CD4-positive, alpha-beta T cell (primary cell): ENCODE measurements at regions of chr19 and their contacts with region 1.

Region 1: GRCh38 chr19:38374429-38375176 is at the start of gene PSMD8:
- DNase-seq: peak; percentile 95 to 100 (median 98)
- ATAC-seq: peak; percentile 96
- H3K4me3 ChIP-seq: peak within 1 kb of the TSS; percentile 93
- H3K4me3 Mint-ChIP-seq: peak within 1 kb of the TSS; percentile 99
- H3K27ac ChIP-seq: peak within 1 kb of the TSS; percentile 77 to 89
- H3K27ac Mint-ChIP-seq: peak within 1 kb of the TSS; percentile 89
- H3K4me1 ChIP-seq: peaks cover 34% of the 10 kb centered on the region
- H3K4me1 Mint-ChIP-seq: peaks cover 30% of the 10 kb centered on the region
- H3K27me3 ChIP-seq: no peaks in the 10 kb centered on the region
- H3K27me3 Mint-ChIP-seq: peaks cover 6% of the 10 kb centered on the region
- CTCF ChIP-seq: peak; percentile 19
- total RNA-seq, gene PSMD8: 61.2 to 64.4 TPM

Region 2: GRCh38 chr19:38245826-38246498 is 128.6 kb before region 1 on chr19:
- CTCF ChIA-PET with region 1: interaction called, 4 read pairs
- POLR2A ChIA-PET with region 1: interaction called, 5 read pairs
- intact Hi-C with region 1: loop called in 1 of 2 experiments (anchors 2 kb)
- DNase-seq: no peak
- ATAC-seq: no peak
- H3K4me3 ChIP-seq: no peak overlapping the region
- H3K4me3 Mint-ChIP-seq: no peak overlapping the region
- H3K27ac ChIP-seq: no peak overlapping the region
- H3K27ac Mint-ChIP-seq: no peak overlapping the region
- H3K4me1 ChIP-seq: peaks cover 7% of the 10 kb centered on the region
- H3K4me1 Mint-ChIP-seq: peaks cover 4% of the 10 kb centered on the region
- H3K27me3 ChIP-seq: peaks cover 0 to 2% of the 10 kb centered on the region in 2 experiments
- H3K27me3 Mint-ChIP-seq: no peaks in the 10 kb centered on the region
- CTCF ChIP-seq: no peak

Region 3: DNA sequence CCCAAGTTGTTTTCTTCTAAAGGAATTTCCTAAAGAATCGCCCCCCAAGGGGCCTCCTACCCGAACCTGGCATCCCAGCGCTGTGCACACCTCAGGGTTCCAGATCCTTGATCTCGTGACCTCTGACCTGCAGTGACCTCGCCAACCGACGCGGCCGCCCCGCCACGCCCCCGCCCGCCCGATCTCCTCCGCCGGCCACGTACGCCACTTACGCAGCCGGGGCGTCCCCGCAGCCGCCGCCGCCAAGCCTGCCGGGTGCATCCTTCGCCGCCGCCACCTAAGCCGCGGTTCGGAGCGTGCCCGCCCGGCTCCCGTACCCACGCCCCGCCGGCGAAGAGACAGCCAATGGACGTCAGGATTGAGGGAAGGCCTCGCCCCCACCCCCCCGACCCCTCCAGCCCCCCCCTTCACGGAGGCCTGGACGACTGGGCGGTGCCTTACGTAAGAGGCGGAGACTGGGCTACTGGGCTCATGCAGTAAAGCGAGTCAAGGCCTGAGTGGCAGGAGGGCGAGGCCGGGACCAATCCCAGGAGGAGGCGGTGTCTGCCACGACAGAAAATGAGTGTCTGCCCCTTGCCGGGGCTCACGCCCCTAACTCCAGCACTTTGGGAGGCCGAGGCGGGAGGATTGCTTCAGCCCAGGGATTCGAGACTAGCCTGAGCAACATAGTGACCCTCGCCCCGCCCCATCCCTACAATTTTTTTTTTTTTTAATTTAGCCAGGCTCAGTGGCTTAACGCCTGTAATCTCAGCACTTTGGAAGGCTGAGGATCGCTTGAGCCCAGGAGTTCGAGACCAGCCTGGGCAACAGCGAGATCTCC is 58.7 kb before region 1 on chr19 and contains the start of gene YIF1B:
- CTCF ChIA-PET with region 1: no interaction called
- POLR2A ChIA-PET with region 1: interaction called, 5 read pairs
- intact Hi-C with region 1: loop called (anchors 1 kb)
- DNase-seq: peak; percentile 90 to 98 (median 94)
- ATAC-seq: peak; percentile 90
- H3K4me3 ChIP-seq: peak within 1 kb of the TSS; percentile 76
- H3K4me3 Mint-ChIP-seq: peak within 1 kb of the TSS; percentile 90
- H3K27ac ChIP-seq: peak within 1 kb of the TSS; percentile 79 to 88
- H3K27ac Mint-ChIP-seq: peak within 1 kb of the TSS; percentile 88
- H3K4me1 ChIP-seq: peaks cover 51% of the 10 kb centered on the region
- H3K4me1 Mint-ChIP-seq: peaks cover 45% of the 10 kb centered on the region
- H3K27me3 ChIP-seq: no peaks in the 10 kb centered on the region
- H3K27me3 Mint-ChIP-seq: no peaks in the 10 kb centered on the region
- CTCF ChIP-seq: no peak
- total RNA-seq, gene YIF1B: 15.9 to 17.1 TPM

Region 4: DNA sequence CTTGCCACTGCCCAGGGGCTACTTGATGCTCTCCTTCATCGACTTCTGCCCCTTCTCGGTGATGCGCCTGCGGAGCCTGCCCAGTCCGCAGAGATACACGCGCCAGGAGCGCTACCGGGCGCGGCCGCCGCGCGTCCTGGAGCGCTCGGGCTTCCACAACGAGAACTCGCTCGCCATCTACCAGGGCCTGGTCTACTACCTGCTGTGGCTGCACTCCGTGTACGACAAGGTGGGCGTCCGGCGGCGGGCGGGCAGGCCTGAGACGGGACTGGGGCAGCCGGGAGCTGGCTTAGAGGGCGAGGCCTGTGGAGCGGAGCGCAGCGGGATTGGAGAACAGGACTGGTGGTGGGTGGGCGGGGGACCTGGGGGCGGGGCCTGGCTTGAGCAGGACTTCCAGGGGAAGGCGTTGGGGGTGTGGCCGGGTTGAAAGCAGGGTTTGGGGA is 12.9 kb before region 1 on chr19:
- CTCF ChIA-PET with region 1: interaction called, 7 read pairs
- POLR2A ChIA-PET with region 1: interaction called, 11 read pairs
- intact Hi-C with region 1: no loop called
- DNase-seq: peak; percentile 25 to 81 (median 44)
- ATAC-seq: peak; percentile 73
- H3K4me3 ChIP-seq: peak overlapping the region; percentile 74
- H3K4me3 Mint-ChIP-seq: peak overlapping the region; percentile 82
- H3K27ac ChIP-seq: no peak overlapping the region
- H3K27ac Mint-ChIP-seq: no peak overlapping the region
- H3K4me1 ChIP-seq: peaks cover 19% of the 10 kb centered on the region
- H3K4me1 Mint-ChIP-seq: peaks cover 14% of the 10 kb centered on the region
- H3K27me3 ChIP-seq: peaks cover 0 to 6% of the 10 kb centered on the region in 2 experiments
- H3K27me3 Mint-ChIP-seq: peaks cover 20% of the 10 kb centered on the region
- CTCF ChIP-seq: no peak

Region 5: DNA sequence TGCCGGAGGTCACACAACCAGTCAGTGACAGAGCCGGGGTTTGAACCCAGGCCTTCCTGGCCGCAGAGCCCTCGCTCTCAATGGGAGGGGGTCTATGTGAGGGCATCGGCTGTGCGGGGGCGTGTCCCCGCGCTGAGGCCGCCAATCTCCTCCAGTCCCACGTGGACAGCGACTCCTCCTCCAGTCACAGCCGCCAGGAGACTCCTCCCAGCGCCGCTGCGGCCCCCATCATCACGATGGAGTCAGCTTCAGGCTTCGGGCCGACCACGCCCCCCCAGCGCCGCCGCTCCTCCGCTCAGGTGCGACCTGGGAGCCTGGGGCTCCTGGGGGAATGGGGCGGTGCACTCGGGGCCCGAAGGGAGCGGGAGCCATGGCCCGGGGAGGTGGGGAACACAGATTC is 19.9 kb after region 1 on chr19:
- CTCF ChIA-PET with region 1: no interaction called
- POLR2A ChIA-PET with region 1: interaction called, 45 read pairs
- intact Hi-C with region 1: loop called in 1 of 2 experiments (anchors 2 kb)
- DNase-seq: peak; percentile 33 to 86 (median 60)
- ATAC-seq: peak; percentile 64
- H3K4me3 ChIP-seq: peak overlapping the region; percentile 44
- H3K4me3 Mint-ChIP-seq: peak overlapping the region; percentile 71
- H3K27ac ChIP-seq: no peak overlapping the region
- H3K27ac Mint-ChIP-seq: peak overlapping the region; percentile 72
- H3K4me1 ChIP-seq: peaks cover 19% of the 10 kb centered on the region
- H3K4me1 Mint-ChIP-seq: peaks cover 26% of the 10 kb centered on the region
- H3K27me3 ChIP-seq: no peaks in the 10 kb centered on the region
- H3K27me3 Mint-ChIP-seq: peaks cover 4% of the 10 kb centered on the region
- CTCF ChIP-seq: no peak

Region 6: DNA sequence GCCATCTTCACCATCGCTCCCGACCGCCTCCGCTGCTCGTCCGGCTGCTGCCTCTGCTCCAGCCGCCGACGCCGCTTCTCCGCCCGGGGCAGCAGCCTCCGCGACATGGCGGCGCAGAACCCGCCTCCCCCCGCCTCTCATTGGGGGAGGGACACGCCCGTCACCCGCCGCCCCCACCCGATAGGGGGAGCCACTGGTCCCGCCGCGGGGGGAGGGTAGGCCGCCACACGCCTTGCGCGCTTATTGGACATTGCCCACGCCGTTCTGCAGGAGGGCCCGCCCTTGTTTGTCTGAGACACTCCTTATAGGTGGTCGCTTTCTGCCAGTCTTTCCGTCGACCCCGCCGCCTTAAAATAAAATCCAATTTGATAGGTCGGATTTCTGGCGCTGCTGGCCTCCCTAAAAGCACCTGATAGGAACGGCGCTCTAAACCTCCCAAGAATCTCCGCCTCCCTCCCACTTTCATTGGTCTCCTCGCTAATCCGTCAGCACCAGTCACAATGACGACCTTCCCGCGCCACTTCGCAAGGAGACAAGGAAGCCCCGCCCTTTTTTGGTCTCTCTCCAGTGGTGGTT is 475.3 kb after region 1 on chr19 and contains the start of gene HNRNPL:
- CTCF ChIA-PET with region 1: no interaction called
- POLR2A ChIA-PET with region 1: interaction called, 19 read pairs
- intact Hi-C with region 1: no loop called
- DNase-seq: peak; percentile 98 to 100 (median 99)
- ATAC-seq: peak; percentile 69
- H3K4me3 ChIP-seq: peak within 1 kb of the TSS; percentile 76
- H3K4me3 Mint-ChIP-seq: peak within 1 kb of the TSS; percentile 98
- H3K27ac ChIP-seq: peak within 1 kb of the TSS; percentile 95 to 97
- H3K27ac Mint-ChIP-seq: peak within 1 kb of the TSS; percentile 97
- H3K4me1 ChIP-seq: peaks cover 66% of the 10 kb centered on the region
- H3K4me1 Mint-ChIP-seq: peaks cover 63% of the 10 kb centered on the region
- H3K27me3 ChIP-seq: no peaks in the 10 kb centered on the region
- H3K27me3 Mint-ChIP-seq: no peaks in the 10 kb centered on the region
- CTCF ChIP-seq: peak; percentile 16
- total RNA-seq, gene HNRNPL: 535 to 565 TPM

Region 7: DNA sequence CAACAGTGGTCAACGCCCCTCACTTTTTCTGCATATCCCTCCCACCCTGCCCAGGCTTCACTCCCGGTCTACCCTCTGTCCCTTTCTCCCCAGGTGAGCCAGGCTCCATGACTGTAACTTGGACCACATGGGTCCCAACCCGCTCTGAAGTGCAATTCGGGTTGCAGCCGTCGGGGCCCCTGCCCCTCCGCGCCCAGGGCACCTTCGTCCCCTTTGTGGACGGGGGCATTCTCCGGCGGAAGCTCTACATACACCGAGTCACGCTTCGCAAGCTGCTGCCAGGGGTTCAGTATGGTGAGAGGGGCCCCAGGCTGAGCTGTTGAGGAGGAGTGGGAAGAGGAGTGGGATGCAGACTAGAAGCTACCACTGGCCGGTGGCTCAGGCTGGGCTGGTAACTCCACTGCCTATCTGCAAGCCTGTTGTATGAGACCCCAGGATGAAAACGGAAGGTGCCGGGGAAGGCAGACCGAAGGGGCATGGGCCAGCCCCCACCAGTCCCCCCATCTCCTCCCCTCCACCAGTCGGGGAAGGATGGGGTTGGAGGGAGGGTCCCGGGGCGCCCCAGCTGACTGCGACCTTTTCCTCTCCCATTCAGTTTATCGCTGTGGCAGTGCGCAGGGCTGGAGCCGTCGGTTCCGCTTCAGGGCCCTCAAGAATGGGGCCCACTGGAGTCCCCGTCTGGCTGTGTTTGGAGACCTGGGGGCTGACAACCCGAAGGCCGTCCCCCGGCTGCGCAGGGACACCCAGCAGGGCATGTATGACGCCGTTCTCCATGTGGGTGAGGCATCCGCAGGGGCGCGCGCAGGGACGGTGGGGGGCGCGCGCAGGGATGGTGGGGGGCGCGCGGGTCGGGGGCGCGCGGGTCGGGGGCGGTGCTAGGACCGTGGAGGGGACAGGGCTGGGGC is 724.0 kb after region 1 on chr19:
- CTCF ChIA-PET with region 1: no interaction called
- POLR2A ChIA-PET with region 1: no interaction called
- intact Hi-C with region 1: no loop called
- DNase-seq: no peak
- ATAC-seq: no peak
- H3K4me3 ChIP-seq: no peak overlapping the region
- H3K4me3 Mint-ChIP-seq: no peak overlapping the region
- H3K27ac ChIP-seq: no peak overlapping the region
- H3K27ac Mint-ChIP-seq: no peak overlapping the region
- H3K4me1 ChIP-seq: peaks cover 2% of the 10 kb centered on the region
- H3K4me1 Mint-ChIP-seq: no peaks in the 10 kb centered on the region
- H3K27me3 ChIP-seq: peaks cover 12 to 13% of the 10 kb centered on the region in 2 experiments
- H3K27me3 Mint-ChIP-seq: peaks cover 58% of the 10 kb centered on the region
- CTCF ChIP-seq: no peak